ENCODE measurements at regions of chr13 and their contacts with region 1.

Region 1: DNA sequence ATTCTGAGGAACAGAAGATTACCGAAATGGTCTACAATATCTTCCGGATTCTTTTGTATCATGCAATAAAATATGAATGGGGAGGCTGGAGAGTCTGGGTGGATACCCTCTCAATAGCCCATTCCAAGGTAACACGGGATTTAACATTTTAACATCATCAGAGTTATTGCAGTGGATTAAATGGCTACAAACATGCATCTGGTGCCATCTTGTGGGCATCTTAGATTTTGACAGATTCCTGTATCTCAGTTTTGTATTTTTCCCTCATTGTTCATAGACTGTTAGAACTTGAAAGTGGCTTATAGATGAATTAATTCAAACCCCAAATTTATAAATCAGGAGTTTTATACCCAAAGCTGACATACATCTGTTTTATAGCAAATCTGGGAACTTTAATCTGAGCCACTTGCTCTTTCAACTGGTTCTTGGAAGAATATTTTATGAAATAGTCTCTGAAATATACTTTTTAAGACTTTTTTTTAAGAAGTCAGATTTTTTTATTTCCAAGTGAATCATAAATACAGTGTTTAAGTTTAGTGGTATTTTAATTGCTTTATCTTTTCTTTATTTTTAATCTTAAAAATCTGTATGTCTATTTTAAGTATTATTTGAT is 215.2 kb downstream of the NBEA start:
- DNase-seq: peak in 1 of 2 donors; percentile 42
- ATAC-seq: peak in 6 of 8 donors; percentile 29 to 67 (median 56)
- H3K4me3 ChIP-seq: no peak overlapping the region
- H3K27ac ChIP-seq: no peak overlapping the region
- H3K4me1 ChIP-seq: peaks cover 0 to 13% (median 2%) of the 10 kb centered on the region in 9 donors
- H3K27me3 ChIP-seq: no peaks in the 10 kb centered on the region
- CTCF ChIP-seq: peak; percentile 57 to 85 (median 74)

Region 2: GRCh38 chr13:33799950-33800592 is 1357.2 kb before region 1 on chr13:
- intact Hi-C with region 1: loop called in 2 of 10 experiments (anchors 5 to 10 kb)
- DNase-seq: no peak
- ATAC-seq: peak in 6 of 8 donors; percentile 18 to 64 (median 46)
- H3K4me3 ChIP-seq: peak overlapping the region in 4 of 10 donors; percentile 2 to 33 (median 10)
- H3K27ac ChIP-seq: peak overlapping the region in 4 of 10 donors; percentile 6 to 79 (median 52)
- H3K4me1 ChIP-seq: peaks cover 0 to 41% (median 20%) of the 10 kb centered on the region in 9 donors
- H3K27me3 ChIP-seq: no peaks in the 10 kb centered on the region
- CTCF ChIP-seq: peak in 7 of 9 donors; percentile 30 to 71 (median 61)

Region 3: DNA sequence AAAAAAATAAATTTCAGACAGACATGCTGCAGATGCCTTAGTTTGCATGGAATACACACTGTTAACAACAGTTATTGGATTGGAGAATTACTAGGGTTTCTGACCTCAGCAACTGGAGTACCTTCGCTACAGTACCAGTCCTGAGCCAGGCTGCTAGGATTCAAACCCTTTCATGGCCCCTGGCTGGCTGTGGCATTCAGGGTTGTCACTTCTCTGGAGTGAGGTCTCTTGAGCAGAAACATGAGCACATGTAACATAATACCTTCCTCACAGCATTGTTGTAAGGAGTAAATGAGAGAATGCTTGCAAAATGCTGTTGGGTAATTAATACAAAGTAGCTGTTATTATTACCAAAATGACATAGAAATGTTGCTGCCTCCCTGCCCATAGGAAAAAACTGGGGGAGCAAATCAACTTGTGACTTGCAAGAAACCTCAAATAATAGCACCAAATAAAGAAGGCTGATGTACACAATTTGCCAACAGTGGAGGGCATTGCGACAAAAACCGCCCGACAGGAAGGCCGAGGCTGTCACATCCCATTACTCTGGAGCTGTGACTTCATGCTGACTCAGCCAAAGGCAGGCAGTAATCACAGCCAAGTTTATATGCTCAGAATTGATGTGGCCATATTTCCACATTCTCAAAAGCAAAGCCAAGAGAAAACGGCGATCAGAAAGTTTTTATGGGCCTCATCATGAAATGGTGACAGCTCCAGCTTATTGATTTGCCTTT is 1238.9 kb before region 1 on chr13:
- intact Hi-C with region 1: loop called in 1 of 10 experiments (anchors 2 kb)
- DNase-seq: no peak
- ATAC-seq: peak in 1 of 8 donors; percentile 41
- H3K4me3 ChIP-seq: no peak overlapping the region
- H3K27ac ChIP-seq: no peak overlapping the region
- H3K4me1 ChIP-seq: peaks cover 0 to 15% (median 6%) of the 10 kb centered on the region in 9 donors
- H3K27me3 ChIP-seq: no peaks in the 10 kb centered on the region
- CTCF ChIP-seq: no peak

Region 4: DNA sequence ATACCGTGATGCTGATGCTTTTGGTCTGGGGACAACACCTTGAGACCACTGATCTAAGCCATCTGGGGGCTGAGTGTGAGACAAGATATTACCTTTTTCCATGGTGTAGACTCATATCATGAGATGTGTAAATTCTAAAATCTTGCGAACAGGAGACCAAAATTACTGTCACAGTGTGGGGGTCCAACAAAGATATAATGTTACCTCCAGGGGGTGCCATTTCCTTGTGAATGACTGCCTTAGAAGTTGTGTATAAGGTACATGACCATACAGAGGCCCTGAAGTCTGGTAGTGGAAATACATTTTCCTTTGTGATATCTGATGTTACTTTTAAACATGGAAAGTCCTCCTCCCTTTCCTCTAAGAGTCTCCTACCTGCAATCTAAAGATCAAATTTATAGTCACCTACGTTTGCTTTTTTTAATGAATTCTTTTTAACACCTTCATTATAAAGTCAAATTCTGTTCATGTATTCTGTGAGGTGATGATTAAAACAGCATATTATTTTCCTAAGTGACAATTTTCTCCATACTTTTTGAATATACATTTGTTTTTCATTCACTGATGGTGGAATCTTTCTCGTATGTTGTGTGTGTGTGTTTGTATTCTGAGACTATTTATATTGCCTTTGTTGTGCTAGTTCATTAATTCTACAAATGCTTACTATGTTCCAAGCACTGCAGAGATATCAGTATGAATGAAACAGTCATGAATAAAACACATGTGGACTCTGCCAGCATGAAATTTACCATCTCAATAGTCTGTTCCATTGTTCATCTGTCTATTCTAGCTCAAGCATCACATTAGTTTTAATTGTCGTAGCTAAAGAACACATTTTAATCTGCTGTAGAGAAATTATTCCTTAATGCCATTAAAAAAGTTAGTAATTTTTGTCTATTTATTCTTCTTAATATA is 1225.6 kb before region 1 on chr13:
- intact Hi-C with region 1: loop called in 7 of 10 experiments (anchors 5 to 10 kb)
- DNase-seq: peak in 1 of 2 donors; percentile 28
- ATAC-seq: peak in 7 of 8 donors; percentile 64 to 85 (median 75)
- H3K4me3 ChIP-seq: no peak overlapping the region
- H3K27ac ChIP-seq: no peak overlapping the region
- H3K4me1 ChIP-seq: peaks cover 0 to 13% (median 0%) of the 10 kb centered on the region in 9 donors
- H3K27me3 ChIP-seq: no peaks in the 10 kb centered on the region
- CTCF ChIP-seq: peak in 8 of 9 donors; percentile 23 to 69 (median 56)

Region 5: GRCh38 chr13:34086281-34086680 is 1071.0 kb before region 1 on chr13:
- intact Hi-C with region 1: loop called in 2 of 10 experiments (anchors 10 kb)
- DNase-seq: no peak
- ATAC-seq: no peak
- H3K4me3 ChIP-seq: no peak overlapping the region
- H3K27ac ChIP-seq: no peak overlapping the region
- H3K4me1 ChIP-seq: no peaks in the 10 kb centered on the region
- H3K27me3 ChIP-seq: no peaks in the 10 kb centered on the region
- CTCF ChIP-seq: no peak

Region 6: GRCh38 chr13:34750078-34750931 is 406.9 kb before region 1 on chr13:
- intact Hi-C with region 1: loop called in 1 of 10 experiments (anchors 10 kb)
- DNase-seq: peak; percentile 26 to 45
- ATAC-seq: peak in 5 of 8 donors; percentile 12 to 56 (median 33)
- H3K4me3 ChIP-seq: peak overlapping the region in 7 of 10 donors; percentile 17 to 44 (median 39)
- H3K27ac ChIP-seq: peak overlapping the region in 2 of 10 donors; percentile 17 to 81
- H3K4me1 ChIP-seq: peaks cover 11 to 42% (median 28%) of the 10 kb centered on the region in 9 donors
- H3K27me3 ChIP-seq: no peaks in the 10 kb centered on the region
- CTCF ChIP-seq: no peak

Region 7: GRCh38 chr13:34941835-34942731 is 215.2 kb before region 1 on chr13 and contains the start of gene NBEA:
- intact Hi-C with region 1: loop called in 3 of 10 experiments (anchors 10 kb)
- DNase-seq: peak; percentile 74 to 87
- ATAC-seq: peak; percentile 85 to 94 (median 90)
- H3K4me3 ChIP-seq: peak within 1 kb of the TSS; percentile 79 to 96 (median 86)
- H3K27ac ChIP-seq: peak within 1 kb of the TSS; percentile 54 to 85 (median 78)
- H3K4me1 ChIP-seq: peaks cover 0 to 34% (median 25%) of the 10 kb centered on the region in 9 donors
- H3K27me3 ChIP-seq: peaks cover 0 to 23% (median 0%) of the 10 kb centered on the region in 7 donors
- CTCF ChIP-seq: peak; percentile 15 to 68 (median 49)
- total RNA-seq, gene NBEA: 18.4 to 30.6 (median 26.3) TPM

Region 8: DNA sequence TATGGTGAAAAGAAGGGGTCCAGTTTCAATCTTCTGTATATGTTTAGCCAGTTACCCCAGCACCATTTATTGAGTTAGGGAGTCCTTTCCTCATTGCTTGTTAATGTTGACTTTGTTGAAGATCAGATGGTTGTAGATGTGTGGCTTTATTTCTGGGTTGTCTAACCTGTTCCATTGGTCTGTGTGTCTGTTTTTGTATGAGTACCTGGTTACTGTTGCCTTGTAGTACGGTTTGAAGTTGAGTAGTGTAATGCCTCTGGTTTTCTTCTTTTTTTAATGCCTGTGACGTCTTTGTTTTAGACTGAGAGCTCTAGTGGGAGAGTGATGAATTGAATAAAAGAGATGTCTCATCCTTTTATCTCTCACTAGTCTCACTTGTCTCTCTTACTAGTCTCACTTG is 131.9 kb before region 1 on chr13:
- intact Hi-C with region 1: no loop called
- DNase-seq: no peak
- ATAC-seq: no peak
- H3K4me3 ChIP-seq: no peak overlapping the region
- H3K27ac ChIP-seq: no peak overlapping the region
- H3K4me1 ChIP-seq: no peaks in the 10 kb centered on the region
- H3K27me3 ChIP-seq: no peaks in the 10 kb centered on the region
- CTCF ChIP-seq: no peak